Naive thymus-derived CD4-positive, alpha-beta T cell (primary cell): ENCODE measurements at regions of chr20 and their contacts with region 1.

Region 1: GRCh38 chr20:35277531-35278395 is at the start of gene MMP24OS:
- DNase-seq: peak; percentile 77 to 90 (median 87)
- ATAC-seq: peak; percentile 95
- H3K4me3 ChIP-seq: peak within 1 kb of the TSS; percentile 99
- H3K4me3 Mint-ChIP-seq: peak within 1 kb of the TSS; percentile 84 to 97 (median 96)
- H3K27ac ChIP-seq: peak within 1 kb of the TSS; percentile 96
- H3K27ac Mint-ChIP-seq: peak within 1 kb of the TSS; percentile 95 to 99 (median 98)
- H3K4me1 ChIP-seq: peaks cover 11 to 18% of the 10 kb centered on the region in 2 donors
- H3K4me1 Mint-ChIP-seq: peaks cover 9 to 46% (median 28%) of the 10 kb centered on the region in 7 donors
- H3K27me3 ChIP-seq: no peaks in the 10 kb centered on the region
- H3K27me3 Mint-ChIP-seq: no peaks in the 10 kb centered on the region
- total RNA-seq, gene MMP24OS: 43.8 to 88.6 (median 69.4) TPM

Region 2: DNA sequence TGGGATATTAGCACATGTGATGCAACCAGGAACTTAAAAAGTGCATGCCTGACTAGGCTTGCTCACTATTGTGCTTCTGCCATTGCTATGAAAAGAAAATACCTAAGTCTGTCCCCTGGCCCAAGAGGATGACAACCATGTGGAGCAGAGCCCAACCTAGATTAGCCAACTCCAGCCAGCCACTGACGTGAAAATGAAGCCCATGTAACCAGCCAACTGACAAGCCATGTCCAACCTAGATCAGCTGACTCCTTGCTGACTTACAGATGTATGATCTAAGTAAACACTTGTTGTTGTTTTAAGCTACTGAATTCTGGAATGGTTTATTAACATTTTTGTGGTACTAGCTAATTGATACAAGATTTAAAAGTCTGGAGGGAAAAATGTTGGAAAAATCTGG is 648.4 kb before region 1 on chr20:
- CTCF ChIA-PET with region 1: no interaction called
- POLR2A ChIA-PET with region 1: no interaction called
- intact Hi-C with region 1: no loop called
- DNase-seq: no peak
- ATAC-seq: no peak
- H3K4me3 ChIP-seq: no peak overlapping the region
- H3K4me3 Mint-ChIP-seq: no peak overlapping the region
- H3K27ac ChIP-seq: no peak overlapping the region
- H3K27ac Mint-ChIP-seq: peak overlapping the region in 1 of 9 donors; percentile 49
- H3K4me1 ChIP-seq: no peaks in the 10 kb centered on the region
- H3K4me1 Mint-ChIP-seq: no peaks in the 10 kb centered on the region
- H3K27me3 ChIP-seq: no peaks in the 10 kb centered on the region
- H3K27me3 Mint-ChIP-seq: no peaks in the 10 kb centered on the region

Region 3: DNA sequence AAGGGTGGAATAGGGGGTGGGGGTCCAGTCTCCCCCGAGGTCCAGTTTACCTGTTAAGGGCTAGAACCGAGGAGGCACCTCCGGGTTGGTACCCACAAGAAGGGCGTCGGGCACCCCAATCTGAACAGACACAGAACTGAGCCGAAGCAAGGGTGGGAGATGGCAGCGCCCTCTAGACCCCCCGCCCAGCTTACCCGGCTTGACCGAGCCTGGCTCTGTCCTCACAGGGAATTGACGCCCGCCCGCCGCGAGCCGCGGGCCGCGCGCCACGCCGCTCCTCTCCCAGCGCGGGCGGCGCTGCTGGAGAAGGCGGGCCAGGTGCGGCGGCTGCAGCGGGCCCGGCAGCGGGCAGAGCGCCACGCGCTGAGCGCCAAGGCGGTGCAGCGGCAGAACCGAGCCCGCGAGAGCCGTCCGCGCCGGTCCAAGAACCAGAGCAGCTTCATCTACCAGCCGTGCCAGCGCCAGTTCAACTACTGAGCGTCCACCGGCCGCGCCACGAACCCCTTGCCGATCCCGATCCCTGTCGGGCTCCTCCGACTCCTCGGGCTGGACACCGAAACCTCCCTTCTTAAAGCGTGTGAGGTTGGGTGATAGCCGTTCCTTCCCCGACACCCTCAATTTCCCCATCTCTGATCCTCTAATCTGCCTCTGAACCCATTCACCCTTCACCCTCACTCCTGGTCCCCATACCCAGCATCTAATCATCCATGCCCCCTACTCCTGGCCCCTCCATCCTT is 567.8 kb before region 1 on chr20:
- CTCF ChIA-PET with region 1: no interaction called
- POLR2A ChIA-PET with region 1: no interaction called
- intact Hi-C with region 1: loop called in 1 of 2 experiments (anchors 5 kb)
- DNase-seq: peak in 1 of 9 donors; percentile 65
- ATAC-seq: peak; percentile 58
- H3K4me3 ChIP-seq: peak overlapping the region; percentile 75
- H3K4me3 Mint-ChIP-seq: peak overlapping the region; percentile 80 to 95 (median 89)
- H3K27ac ChIP-seq: peak overlapping the region; percentile 87
- H3K27ac Mint-ChIP-seq: peak overlapping the region; percentile 16 to 96 (median 87)
- H3K4me1 ChIP-seq: peaks cover 3 to 7% of the 10 kb centered on the region in 2 donors
- H3K4me1 Mint-ChIP-seq: peaks cover 11 to 38% (median 16%) of the 10 kb centered on the region in 7 donors
- H3K27me3 ChIP-seq: no peaks in the 10 kb centered on the region
- H3K27me3 Mint-ChIP-seq: peaks cover 0 to 9% (median 0%) of the 10 kb centered on the region in 5 donors

Region 4: GRCh38 chr20:34955232-34956040 is 322.3 kb before region 1 on chr20 and contains the starts of genes GSS and MYH7B:
- CTCF ChIA-PET with region 1: no interaction called
- POLR2A ChIA-PET with region 1: no interaction called
- intact Hi-C with region 1: loop called in 1 of 2 experiments (anchors 1 kb)
- DNase-seq: peak; percentile 90 to 100 (median 94)
- ATAC-seq: peak; percentile 97
- H3K4me3 ChIP-seq: peak within 1 kb of the TSS; percentile 87
- H3K4me3 Mint-ChIP-seq: peak within 1 kb of the TSS; percentile 95 to 100 (median 98)
- H3K27ac ChIP-seq: peak within 1 kb of the TSS; percentile 77
- H3K27ac Mint-ChIP-seq: peak within 1 kb of the TSS; percentile 94 to 98 (median 97)
- H3K4me1 ChIP-seq: peaks cover 5 to 11% of the 10 kb centered on the region in 2 donors
- H3K4me1 Mint-ChIP-seq: peaks cover 11 to 40% (median 34%) of the 10 kb centered on the region in 7 donors
- H3K27me3 ChIP-seq: no peaks in the 10 kb centered on the region
- H3K27me3 Mint-ChIP-seq: no peaks in the 10 kb centered on the region
- total RNA-seq, gene GSS: 25.9 to 54.4 (median 45.8) TPM
- total RNA-seq, gene MYH7B: 0.15 to 1.0 (median 0.44) TPM

Region 5: DNA sequence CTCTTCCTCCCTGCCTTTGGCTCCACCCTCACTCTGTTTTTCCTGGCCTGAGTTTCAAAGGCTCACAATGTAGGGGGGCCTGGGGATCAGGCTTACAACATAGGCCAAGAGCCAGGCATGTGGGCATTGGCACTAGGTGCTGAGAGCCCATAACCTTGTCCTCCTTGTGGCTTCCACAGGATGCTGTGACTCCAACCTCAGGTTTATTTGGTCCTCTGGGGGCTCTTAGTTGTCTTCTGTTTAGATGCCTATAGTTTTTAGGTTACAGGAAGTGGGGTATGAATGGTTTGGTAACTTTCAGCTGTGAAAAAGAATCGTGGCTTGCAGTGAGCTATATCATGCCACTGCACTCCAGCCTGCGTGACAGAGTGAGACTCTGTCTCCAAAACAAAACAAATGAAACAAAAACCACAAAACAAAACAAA is 25.7 kb before region 1 on chr20:
- CTCF ChIA-PET with region 1: no interaction called
- POLR2A ChIA-PET with region 1: no interaction called
- intact Hi-C with region 1: loop called in 1 of 2 experiments (anchors 1 kb)
- DNase-seq: peak in 5 of 9 donors; percentile 6 to 46 (median 31)
- ATAC-seq: peak; percentile 89
- H3K4me3 ChIP-seq: no peak overlapping the region
- H3K4me3 Mint-ChIP-seq: peak overlapping the region in 6 of 10 donors; percentile 13 to 79 (median 38)
- H3K27ac ChIP-seq: peak overlapping the region; percentile 6
- H3K27ac Mint-ChIP-seq: peak overlapping the region; percentile 41 to 96 (median 83)
- H3K4me1 ChIP-seq: peaks cover 12 to 30% of the 10 kb centered on the region in 2 donors
- H3K4me1 Mint-ChIP-seq: peaks cover 13 to 33% (median 22%) of the 10 kb centered on the region in 7 donors
- H3K27me3 ChIP-seq: no peaks in the 10 kb centered on the region
- H3K27me3 Mint-ChIP-seq: no peaks in the 10 kb centered on the region

Region 6: GRCh38 chr20:35463455-35464300 is 185.9 kb after region 1 on chr20:
- CTCF ChIA-PET with region 1: no interaction called
- POLR2A ChIA-PET with region 1: no interaction called
- intact Hi-C with region 1: no loop called
- DNase-seq: peak in 8 of 9 donors; percentile 40 to 70 (median 61)
- ATAC-seq: peak; percentile 90
- H3K4me3 ChIP-seq: no peak overlapping the region
- H3K4me3 Mint-ChIP-seq: no peak overlapping the region
- H3K27ac ChIP-seq: no peak overlapping the region
- H3K27ac Mint-ChIP-seq: peak overlapping the region in 3 of 9 donors; percentile 8 to 32 (median 13)
- H3K4me1 ChIP-seq: no peaks in the 10 kb centered on the region
- H3K4me1 Mint-ChIP-seq: peaks cover 5 to 14% (median 7%) of the 10 kb centered on the region in 7 donors
- H3K27me3 ChIP-seq: no peaks in the 10 kb centered on the region
- H3K27me3 Mint-ChIP-seq: no peaks in the 10 kb centered on the region